ENCODE measurements at regions of chr14 and their contacts with region 1.

Region 1: DNA sequence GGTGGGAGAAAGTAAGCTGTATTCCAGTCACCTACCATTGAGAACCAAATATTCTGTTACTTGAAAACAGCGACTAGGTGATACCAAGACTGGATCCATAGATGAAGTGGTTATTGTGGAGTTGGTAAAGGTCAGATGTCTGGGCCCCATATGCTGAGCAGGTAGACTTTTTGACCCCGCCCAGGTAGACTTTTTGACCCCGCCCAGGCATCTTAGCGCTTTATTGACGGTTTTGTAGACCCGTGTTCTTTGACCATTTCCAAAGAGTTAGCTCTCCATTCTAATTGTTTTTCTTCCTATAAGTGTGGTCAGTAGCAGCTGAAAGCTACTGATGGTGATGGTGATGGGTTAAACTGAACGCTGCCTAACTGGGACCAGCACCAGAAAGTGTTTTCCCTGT is 61.6 kb downstream of the SLC8A3 start:
- DNase-seq: no peak
- H3K4me3 ChIP-seq: no peak overlapping the region
- H3K27ac ChIP-seq: no peak overlapping the region
- H3K4me1 ChIP-seq: no peaks in the 10 kb centered on the region
- H3K27me3 ChIP-seq: no peaks in the 10 kb centered on the region
- CTCF ChIP-seq: no peak
- POLR2A ChIP-seq: no peak

Region 2: DNA sequence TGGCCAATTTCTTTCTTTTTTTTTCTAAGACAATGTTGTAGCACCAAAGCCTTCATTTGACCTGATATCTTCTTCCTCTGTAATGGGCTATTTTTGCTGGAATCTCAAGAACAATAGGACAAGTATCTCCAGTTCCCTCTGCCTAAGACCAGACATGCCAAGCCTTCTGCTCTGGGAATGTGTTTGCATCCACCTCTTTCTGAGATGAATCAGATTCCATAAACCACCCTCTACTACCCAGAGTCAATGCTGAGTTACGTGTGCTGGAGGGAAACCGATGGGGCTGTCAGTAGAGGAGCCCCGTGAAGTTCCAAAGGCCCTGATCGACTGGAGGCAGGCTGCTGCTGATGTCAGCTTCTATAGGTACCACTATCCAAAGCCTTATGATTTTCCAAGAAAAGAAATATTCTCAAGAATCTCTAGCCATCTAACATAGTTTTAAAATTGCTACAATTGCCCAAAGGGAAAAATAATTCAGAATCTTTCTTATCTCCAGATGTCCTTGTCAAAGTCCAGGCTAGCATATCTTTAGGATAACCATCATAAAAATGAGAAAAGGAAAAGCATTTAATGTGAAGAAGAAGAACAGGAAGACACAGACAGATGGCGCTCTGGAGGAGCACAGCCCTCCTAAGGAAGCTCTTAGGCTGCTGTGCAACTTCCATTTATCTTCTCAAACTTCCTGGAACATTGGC is 40.4 kb before region 1 on chr14:
- intact Hi-C with region 1: no loop called
- DNase-seq: no peak
- H3K4me3 ChIP-seq: no peak overlapping the region
- H3K27ac ChIP-seq: no peak overlapping the region
- H3K4me1 ChIP-seq: no peaks in the 10 kb centered on the region
- H3K27me3 ChIP-seq: peaks cover 0 to 22% of the 10 kb centered on the region in 2 donors
- CTCF ChIP-seq: peak in 1 of 3 donors; percentile 20
- POLR2A ChIP-seq: no peak

Region 3: DNA sequence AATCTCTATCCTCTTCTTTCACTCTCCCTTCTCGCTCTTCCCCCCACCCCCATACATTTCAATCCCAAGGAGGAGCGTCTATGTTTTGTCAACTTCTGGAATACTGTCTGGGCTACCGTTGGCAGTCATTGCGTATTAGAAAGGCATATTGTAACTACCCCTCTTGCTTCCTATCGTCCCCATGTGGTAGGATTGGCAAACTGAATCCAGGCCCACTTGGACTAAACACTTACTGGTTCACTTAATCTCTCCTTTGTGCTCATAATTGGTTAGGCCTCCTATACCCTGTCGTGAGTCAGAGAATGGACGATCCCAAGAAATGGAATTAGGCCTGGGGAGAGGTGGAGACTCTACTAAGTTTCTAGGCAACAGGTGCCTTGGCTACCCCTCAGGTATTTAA is 130.3 kb after region 1 on chr14:
- intact Hi-C with region 1: loop called (anchors 5 kb)
- DNase-seq: no peak
- H3K4me3 ChIP-seq: no peak overlapping the region
- H3K27ac ChIP-seq: no peak overlapping the region
- H3K4me1 ChIP-seq: no peaks in the 10 kb centered on the region
- H3K27me3 ChIP-seq: no peaks in the 10 kb centered on the region
- CTCF ChIP-seq: no peak
- POLR2A ChIP-seq: no peak

Region 4: GRCh38 chr14:71117839-71118743 is 990.9 kb after region 1 on chr14:
- intact Hi-C with region 1: no loop called
- DNase-seq: no peak
- H3K4me3 ChIP-seq: no peak overlapping the region
- H3K27ac ChIP-seq: no peak overlapping the region
- H3K4me1 ChIP-seq: no peaks in the 10 kb centered on the region
- H3K27me3 ChIP-seq: no peaks in the 10 kb centered on the region
- CTCF ChIP-seq: no peak
- POLR2A ChIP-seq: no peak

Measured in breast epithelium (tissue), 4 donors.